Adrenal gland (tissue), 19 donors: ENCODE measurements at regions of chr2 and their contacts with region 1.

Region 1: DNA sequence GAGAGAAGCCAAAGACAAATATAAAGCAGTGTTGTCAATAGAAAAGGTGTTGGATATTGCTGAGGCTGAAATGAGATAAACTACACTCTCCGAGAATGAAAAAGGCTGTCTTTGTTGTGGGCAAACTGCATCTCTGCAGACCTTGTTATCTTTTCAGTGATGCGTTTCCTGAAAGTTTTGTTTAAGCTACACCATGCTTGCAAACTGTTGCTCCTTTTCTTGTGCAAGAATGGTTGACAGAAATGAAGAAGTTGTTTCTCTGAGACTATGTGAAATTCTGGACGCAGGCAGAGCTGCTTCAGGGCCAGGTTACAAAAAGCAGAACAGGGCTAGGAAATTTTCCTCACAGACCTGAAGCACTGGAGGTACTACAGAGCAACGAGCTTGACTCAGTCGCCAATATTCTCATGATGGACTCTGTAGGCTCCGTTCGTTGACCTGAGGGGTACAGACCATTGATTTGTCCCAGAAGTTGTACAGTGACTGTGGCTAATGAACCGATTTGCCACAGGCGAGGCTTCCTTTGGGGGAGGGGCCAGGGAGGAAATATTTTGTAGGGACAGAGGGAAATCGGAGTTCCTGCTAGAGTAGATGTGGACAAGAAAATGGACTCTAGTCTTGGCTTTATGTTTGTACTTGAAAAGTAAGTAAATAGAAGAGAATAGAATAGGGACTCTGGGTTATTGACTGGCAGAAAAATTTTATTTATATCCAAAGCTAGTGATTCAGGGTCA is 3.5 kb upstream of the ATL2 start:
- DNase-seq: no peak
- H3K4me3 ChIP-seq: no peak overlapping the region
- H3K27ac ChIP-seq: no peak overlapping the region
- H3K4me1 ChIP-seq: peaks cover 9 to 10% of the 10 kb centered on the region in 2 donors
- H3K27me3 ChIP-seq: no peaks in the 10 kb centered on the region
- CTCF ChIP-seq: no peak
- POLR2A ChIP-seq: no peak

Region 2: GRCh38 chr2:38076606-38077430 is 303.7 kb before region 1 on chr2:
- intact Hi-C with region 1: no loop called
- DNase-seq: peak; percentile 81 to 90 (median 84)
- H3K4me3 ChIP-seq: peak overlapping the region in 3 of 4 donors; percentile 40 to 75 (median 46)
- H3K27ac ChIP-seq: peak overlapping the region; percentile 50 to 92 (median 84)
- H3K4me1 ChIP-seq: peaks cover 0 to 19% of the 10 kb centered on the region in 2 donors
- H3K27me3 ChIP-seq: peaks cover 5% of the 10 kb centered on the region
- CTCF ChIP-seq: peak in 4 of 6 experiments; percentile 2 to 73 (median 20)
- POLR2A ChIP-seq: peak; percentile 14 to 54

Region 3: GRCh38 chr2:38450509-38450908 is 69.9 kb after region 1 on chr2:
- intact Hi-C with region 1: loop called in 1 of 2 experiments (anchors 10 kb)
- DNase-seq: no peak
- H3K4me3 ChIP-seq: no peak overlapping the region
- H3K27ac ChIP-seq: no peak overlapping the region
- H3K4me1 ChIP-seq: no peaks in the 10 kb centered on the region
- H3K27me3 ChIP-seq: no peaks in the 10 kb centered on the region
- CTCF ChIP-seq: no peak
- POLR2A ChIP-seq: no peak